CD8-positive, alpha-beta memory T cell (primary cell): ENCODE measurements at regions of chr17 and their contacts with region 1.

Region 1: DNA sequence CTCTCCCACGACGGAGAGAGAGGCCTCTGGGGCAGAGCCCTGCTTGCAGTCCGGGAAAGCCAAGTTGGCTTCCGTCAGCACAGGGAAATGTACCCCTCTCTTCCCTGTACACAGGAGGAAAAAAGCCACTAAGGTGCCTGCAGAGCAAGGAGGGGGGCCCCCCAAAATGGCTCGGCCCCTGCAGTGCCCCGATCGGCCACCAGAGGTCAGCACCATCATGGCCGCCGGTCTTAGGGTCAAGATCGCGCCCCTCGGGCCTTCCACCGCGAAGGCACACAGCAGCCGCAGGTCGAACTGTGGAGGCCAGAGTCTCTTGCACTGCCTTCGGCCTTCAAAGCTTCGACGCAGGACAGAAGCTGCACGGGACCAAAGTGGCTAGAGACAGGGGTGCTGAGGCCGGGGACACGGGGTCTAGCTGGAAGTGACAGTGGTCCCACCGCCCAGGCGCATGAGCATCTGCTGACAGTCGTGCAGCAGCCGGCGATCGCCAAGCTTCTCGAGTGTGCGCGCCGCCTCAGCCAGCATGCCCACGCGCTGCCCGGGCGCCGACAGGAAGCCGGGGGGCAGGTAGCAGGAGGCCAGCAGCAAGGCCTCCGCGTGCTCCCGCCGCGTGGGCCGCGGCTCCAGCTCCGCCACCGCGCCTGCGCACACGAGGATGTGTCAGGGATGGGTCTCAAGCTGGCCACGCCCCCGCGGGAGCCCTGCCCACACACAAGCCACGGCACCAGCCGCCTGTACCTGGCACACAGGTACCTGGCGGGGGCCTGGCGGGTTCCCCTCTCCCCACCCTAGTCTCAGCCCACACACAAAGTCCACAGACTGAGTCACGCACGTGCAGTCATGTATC is 24.4 kb downstream of the SREBF1 start:
- DNase-seq: peak; percentile 56 to 75 (median 67)
- H3K4me3 ChIP-seq: no peak overlapping the region
- H3K4me3 Mint-ChIP-seq: peak overlapping the region in 1 of 7 donors; percentile 18
- H3K27ac ChIP-seq: no peak overlapping the region
- H3K27ac Mint-ChIP-seq: peak overlapping the region in 6 of 8 donors; percentile 17 to 78 (median 54)
- H3K4me1 ChIP-seq: peaks cover 7% of the 10 kb centered on the region
- H3K4me1 Mint-ChIP-seq: peaks cover 6 to 17% (median 12%) of the 10 kb centered on the region in 3 donors
- H3K27me3 ChIP-seq: no peaks in the 10 kb centered on the region
- H3K27me3 Mint-ChIP-seq: no peaks in the 10 kb centered on the region

Region 2: DNA sequence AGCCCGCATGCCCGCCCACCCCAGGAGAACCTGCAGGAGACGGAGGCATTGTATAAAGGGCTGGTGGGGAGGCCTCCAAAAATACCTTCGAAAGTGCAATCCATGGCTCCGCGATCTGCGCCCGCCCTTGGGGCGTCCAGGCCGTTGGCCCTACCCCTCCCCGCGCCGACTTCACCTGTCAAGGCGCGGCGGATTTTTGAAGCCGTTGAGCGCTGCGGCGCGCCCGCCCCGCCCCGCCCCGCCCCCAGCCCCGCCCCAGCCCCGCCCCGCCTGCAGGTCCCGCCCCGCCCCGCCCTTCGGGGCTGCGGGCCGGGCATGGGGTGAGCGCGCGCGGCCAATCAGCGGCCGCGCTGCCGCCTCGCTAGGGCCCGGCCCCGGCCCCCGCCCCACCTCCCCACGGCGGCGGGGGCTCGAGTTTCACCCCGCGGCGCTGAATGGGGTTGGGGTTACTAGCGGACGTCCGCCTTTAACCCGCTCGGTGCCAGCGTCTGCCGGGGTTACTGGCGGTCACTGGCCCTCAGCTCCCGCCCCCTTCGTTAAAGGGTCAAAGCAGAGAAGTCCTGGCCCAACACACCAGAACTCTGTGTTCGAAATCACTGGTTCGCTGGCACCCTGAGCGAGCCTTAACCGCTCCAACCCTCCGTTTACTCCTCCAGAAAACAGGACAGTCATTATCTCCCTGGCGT is 11.1 kb after region 1 on chr17:
- CTCF ChIA-PET with region 1: interaction called, 27 read pairs
- POLR2A ChIA-PET with region 1: no interaction called
- DNase-seq: peak; percentile 73 to 85 (median 81)
- H3K4me3 ChIP-seq: peak overlapping the region; percentile 75
- H3K4me3 Mint-ChIP-seq: peak overlapping the region; percentile 73 to 89 (median 84)
- H3K27ac ChIP-seq: peak overlapping the region; percentile 91
- H3K27ac Mint-ChIP-seq: peak overlapping the region; percentile 79 to 98 (median 98)
- H3K4me1 ChIP-seq: peaks cover 91% of the 10 kb centered on the region
- H3K4me1 Mint-ChIP-seq: peaks cover 47 to 91% (median 72%) of the 10 kb centered on the region in 3 donors
- H3K27me3 ChIP-seq: no peaks in the 10 kb centered on the region
- H3K27me3 Mint-ChIP-seq: peaks cover 0 to 3% of the 10 kb centered on the region in 2 donors

Region 3: GRCh38 chr17:17849845-17850373 is 37.5 kb after region 1 on chr17:
- CTCF ChIA-PET with region 1: interaction called, 116 read pairs
- POLR2A ChIA-PET with region 1: no interaction called
- DNase-seq: peak; percentile 60 to 83 (median 72)
- H3K4me3 ChIP-seq: peak overlapping the region; percentile 34
- H3K4me3 Mint-ChIP-seq: peak overlapping the region; percentile 15 to 85 (median 73)
- H3K27ac ChIP-seq: peak overlapping the region; percentile 68
- H3K27ac Mint-ChIP-seq: peak overlapping the region; percentile 91 to 99 (median 98)
- H3K4me1 ChIP-seq: peaks cover 54% of the 10 kb centered on the region
- H3K4me1 Mint-ChIP-seq: peaks cover 45 to 72% (median 54%) of the 10 kb centered on the region in 3 donors
- H3K27me3 ChIP-seq: no peaks in the 10 kb centered on the region
- H3K27me3 Mint-ChIP-seq: no peaks in the 10 kb centered on the region

Region 4: GRCh38 chr17:17919169-17920107 is 107.0 kb after region 1 on chr17:
- CTCF ChIA-PET with region 1: interaction called, 13 read pairs
- POLR2A ChIA-PET with region 1: no interaction called
- DNase-seq: peak; percentile 31 to 75 (median 46)
- H3K4me3 ChIP-seq: no peak overlapping the region
- H3K4me3 Mint-ChIP-seq: no peak overlapping the region
- H3K27ac ChIP-seq: no peak overlapping the region
- H3K27ac Mint-ChIP-seq: peak overlapping the region in 1 of 8 donors; percentile 23
- H3K4me1 ChIP-seq: no peaks in the 10 kb centered on the region
- H3K4me1 Mint-ChIP-seq: peaks cover 4 to 11% (median 6%) of the 10 kb centered on the region in 3 donors
- H3K27me3 ChIP-seq: no peaks in the 10 kb centered on the region
- H3K27me3 Mint-ChIP-seq: no peaks in the 10 kb centered on the region